Dendritic cell treated with granulocyte-macrophage colony-stimulating factor and Interleukin-4, amounts not matched to agents 40 ng/mL and 50 ng/mL, for 4 days (primary cell): ENCODE measurements at regions of chr4 and their contacts with region 1.

Region 1: DNA sequence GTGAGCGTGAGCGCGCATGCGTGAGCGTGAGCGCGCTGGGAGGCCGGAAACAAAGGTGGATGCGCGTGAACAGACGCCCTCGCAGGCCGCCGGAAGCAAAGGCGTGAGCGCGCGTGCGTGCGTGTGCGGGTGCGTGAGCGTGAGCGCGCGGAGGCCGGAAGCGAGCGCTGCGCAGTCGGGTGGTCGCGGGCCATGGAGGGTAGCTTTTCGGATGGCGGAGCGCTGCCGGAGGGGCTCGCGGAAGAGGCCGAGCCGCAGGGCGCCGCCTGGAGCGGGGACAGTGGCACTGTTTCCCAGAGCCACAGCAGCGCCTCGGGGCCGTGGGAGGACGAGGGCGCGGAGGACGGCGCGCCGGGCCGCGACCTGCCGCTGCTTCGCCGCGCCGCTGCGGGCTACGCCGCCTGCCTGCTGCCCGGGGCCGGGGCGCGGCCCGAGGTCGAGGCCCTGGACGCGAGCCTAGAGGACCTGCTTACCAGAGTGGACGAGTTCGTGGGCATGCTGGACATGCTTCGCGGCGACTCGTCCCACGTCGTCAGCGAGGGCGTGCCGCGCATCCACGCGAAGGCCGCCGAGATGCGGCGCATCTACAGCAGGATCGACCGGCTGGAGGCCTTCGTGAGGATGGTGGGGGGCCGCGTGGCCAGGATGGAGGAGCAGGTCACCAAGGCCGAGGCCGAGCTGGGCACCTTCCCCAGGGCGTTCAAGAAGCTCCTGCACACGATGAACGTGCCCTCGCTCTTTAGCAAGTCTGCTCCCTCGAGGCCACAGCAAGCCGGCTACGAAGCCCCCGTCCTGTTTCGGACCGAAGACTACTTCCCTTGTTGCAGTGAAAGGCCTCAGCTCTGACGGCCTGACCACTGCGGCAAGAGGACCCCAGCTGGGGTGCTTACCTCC is at the start of gene BLOC1S4:
- H3K4me3 Mint-ChIP-seq: peak within 1 kb of the TSS; percentile 98
- H3K27ac Mint-ChIP-seq: peak within 1 kb of the TSS; percentile 97
- H3K4me1 Mint-ChIP-seq: peaks cover 34% of the 10 kb centered on the region
- H3K27me3 Mint-ChIP-seq: peaks cover 3% of the 10 kb centered on the region

Region 2: DNA sequence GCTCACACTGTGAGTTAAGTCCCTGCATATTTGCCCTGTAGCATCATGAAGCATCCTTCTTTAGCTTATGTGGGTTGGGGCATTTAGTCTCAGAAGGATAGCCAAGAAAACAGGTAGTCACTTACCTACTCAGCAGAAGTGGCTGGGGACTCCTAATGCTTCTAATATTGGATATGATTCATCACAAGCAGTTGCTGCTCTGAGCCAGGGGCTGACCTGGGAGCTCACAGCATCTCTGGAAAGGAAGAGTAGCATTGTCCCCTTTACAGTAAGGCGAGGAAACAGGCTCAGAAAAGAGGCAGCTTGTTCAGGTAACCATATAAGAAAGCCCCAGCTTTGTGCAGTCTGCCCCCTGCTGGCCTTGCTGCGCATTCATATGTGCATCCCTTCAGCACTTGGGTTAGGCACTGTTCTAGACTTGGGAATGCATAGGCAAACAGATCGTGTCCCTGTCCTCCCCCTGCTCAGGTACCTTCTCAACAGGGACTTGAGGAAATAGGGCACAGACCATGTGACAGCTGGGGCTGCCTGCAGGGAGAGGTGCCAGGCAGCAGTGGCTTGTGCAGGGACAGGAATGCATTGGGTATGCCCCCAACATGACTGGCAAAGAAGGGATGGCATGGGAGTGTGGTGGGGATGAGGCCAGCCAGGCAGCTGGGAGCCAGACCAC is 157.7 kb after region 1 on chr4:
- intact Hi-C with region 1: loop called (anchors 1 kb)
- H3K4me3 Mint-ChIP-seq: no peak overlapping the region
- H3K27ac Mint-ChIP-seq: no peak overlapping the region
- H3K4me1 Mint-ChIP-seq: peaks cover 59% of the 10 kb centered on the region
- H3K27me3 Mint-ChIP-seq: no peaks in the 10 kb centered on the region

Region 3: DNA sequence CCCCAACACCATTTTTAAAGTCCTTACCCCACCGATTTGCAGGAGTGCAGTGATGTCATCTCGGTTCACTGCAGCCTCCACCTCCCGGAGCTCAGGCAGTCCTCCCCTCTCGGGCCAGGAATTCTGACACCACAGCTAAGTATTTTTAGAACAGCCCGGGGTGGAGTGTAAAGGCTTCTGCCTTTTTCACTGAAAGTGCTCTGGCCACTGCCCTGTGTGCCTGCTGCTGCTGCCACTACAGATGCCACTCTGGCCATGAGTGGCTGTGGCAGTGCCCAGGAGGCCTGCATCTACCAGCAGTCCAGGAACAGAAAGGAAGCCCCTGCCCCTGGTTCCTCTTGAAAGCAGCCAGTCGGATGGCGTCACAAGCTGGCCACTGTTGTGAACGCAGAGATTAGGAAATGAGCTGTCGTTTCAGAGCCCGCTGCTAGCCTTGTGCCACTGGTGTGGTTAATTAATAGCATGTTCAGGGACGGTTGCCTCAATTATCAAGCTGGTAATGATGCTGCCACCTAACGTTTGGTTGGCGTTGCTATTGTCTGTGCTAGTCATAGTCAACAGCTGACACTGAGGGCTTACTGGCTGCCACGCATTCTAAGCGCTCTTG is 169.8 kb after region 1 on chr4:
- intact Hi-C with region 1: loop called (anchors 5 kb)
- H3K4me3 Mint-ChIP-seq: no peak overlapping the region
- H3K27ac Mint-ChIP-seq: peak overlapping the region; percentile 74
- H3K4me1 Mint-ChIP-seq: peaks cover 52% of the 10 kb centered on the region
- H3K27me3 Mint-ChIP-seq: peaks cover 1% of the 10 kb centered on the region

Region 4: GRCh38 chr4:7811536-7812191 is 1095.4 kb after region 1 on chr4:
- intact Hi-C with region 1: no loop called
- H3K4me3 Mint-ChIP-seq: no peak overlapping the region
- H3K27ac Mint-ChIP-seq: no peak overlapping the region
- H3K4me1 Mint-ChIP-seq: no peaks in the 10 kb centered on the region
- H3K27me3 Mint-ChIP-seq: peaks cover 13% of the 10 kb centered on the region